Right ventricle myocardium superior (tissue), 1 donor: ENCODE measurements at regions of chr12 and their contacts with region 1.

Region 1: DNA sequence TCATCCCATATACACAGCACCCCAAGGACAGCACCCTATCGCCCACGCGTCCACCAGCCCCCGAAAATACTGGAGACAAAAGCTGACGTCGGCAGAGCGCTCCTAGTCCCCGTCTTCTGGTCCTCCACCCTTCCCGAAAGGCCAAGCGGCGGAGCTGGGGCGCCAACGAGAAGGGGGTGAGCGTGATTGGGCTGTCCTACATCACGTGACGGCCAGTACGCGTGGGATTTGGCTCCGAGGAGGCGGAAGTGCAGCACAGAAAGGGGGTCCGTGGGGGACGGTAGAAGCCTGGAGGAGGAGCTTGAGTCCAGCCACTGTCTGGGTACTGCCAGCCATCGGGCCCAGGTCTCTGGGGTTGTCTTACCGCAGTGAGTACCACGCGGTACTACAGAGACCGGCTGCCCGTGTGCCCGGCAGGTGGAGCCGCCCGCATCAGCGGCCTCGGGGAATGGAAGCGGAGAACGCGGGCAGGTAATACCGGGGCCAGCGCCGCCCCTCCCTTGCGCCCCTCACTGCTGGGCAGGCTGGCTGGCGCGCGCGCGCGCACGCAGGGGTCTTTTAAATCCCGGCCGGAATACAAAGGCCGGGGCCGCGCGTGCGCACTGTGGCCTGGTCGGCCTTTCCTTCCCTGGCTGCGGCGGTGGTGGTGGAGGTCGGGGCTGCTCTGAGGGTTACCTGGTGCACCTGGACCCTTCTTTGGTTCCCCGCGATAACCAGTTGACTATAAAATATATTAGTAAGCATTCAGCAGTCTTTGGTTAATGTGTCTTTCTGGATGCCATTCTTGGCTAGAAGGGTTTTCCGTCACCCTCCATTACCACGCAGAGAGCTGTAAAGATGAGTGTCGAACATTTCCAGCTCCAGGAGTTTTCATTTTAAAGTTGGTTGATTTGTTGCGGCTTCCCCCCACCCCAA is at the start of gene TDG:
- DNase-seq: peak; percentile 98
- ATAC-seq: peak; percentile 99
- total RNA-seq, gene TDG: 10.2 TPM

Region 2: DNA sequence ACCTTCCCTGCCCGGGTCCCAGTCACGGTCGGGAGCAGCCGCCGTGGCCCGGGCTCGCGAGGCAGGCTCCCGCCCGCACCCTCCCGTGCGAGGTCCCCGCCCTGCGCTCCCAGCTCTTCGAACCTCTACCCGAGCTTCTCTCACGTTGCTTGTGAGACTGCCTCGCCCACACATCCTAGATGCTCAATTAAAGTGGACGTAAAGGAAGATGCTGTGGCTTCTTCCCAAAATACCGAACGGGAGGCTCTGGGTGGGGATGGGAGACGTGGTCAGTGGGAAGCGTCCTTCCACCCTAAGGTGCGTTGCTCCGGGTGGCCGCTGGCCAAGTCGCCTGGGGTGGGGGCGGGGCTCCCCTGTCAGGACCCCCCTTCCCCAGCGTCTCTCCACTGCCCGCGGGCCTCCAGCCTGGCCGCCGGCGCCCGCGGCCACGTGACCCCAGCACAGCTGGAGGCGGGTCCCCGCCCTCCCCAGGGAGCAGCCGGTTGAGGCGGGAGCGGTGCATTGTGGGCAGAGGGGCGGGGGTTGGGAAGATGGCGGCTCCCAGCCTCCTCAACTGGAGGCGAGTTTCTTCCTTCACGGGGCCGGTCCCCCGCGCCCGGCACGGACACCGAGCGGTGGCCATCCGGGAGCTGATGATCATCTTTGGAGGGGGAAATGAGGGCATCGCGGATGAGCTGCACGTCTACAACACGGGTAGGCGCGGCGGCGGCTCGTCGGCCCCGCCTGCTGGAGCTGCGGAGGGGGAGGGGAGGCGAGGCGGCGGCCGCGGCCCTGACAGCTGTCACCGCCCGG is 98.4 kb after region 1 on chr12 and contains the start of gene HCFC2:
- intact Hi-C with region 1: loop called (anchors 10 kb)
- DNase-seq: peak; percentile 95
- ATAC-seq: peak; percentile 99
- total RNA-seq, gene HCFC2: 8.8 TPM

Region 3: DNA sequence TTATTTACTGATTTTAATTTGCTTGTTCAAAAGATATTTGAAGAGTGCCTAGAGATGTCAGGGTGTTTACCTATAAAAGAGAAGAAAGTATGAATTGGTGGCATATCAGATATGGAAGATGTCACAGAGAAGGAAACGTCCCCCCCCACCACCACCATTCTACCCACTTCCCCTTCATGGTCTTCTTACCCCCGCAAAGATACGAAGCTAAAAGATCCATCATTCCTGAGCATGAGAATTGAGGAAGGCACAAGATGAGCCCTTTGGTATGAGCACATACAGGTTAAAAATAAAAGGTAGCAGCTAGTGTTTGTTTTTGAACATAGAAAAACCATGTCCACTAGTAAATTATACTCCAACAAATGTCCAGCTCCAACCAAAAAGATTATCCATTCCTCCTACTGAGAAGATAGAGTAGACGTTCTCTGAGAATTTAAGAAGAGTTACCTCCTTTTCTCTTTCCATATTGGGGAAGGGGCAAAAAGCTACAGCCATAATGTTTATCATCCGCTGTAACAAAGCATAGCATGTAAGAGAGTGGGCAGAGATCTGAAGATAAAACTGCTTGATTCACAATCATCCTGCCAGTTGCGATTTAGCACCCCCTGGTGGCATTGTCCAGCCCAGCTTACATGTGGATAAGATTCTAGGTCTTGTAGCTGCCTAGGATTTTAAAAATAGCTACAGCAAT is 143.1 kb after region 1 on chr12:
- intact Hi-C with region 1: loop called (anchors 5 kb)
- DNase-seq: peak; percentile 84
- ATAC-seq: peak; percentile 81